Body of pancreas (tissue), 4 donors: ENCODE measurements at regions of chr3 and their contacts with region 1.

Region 1: DNA sequence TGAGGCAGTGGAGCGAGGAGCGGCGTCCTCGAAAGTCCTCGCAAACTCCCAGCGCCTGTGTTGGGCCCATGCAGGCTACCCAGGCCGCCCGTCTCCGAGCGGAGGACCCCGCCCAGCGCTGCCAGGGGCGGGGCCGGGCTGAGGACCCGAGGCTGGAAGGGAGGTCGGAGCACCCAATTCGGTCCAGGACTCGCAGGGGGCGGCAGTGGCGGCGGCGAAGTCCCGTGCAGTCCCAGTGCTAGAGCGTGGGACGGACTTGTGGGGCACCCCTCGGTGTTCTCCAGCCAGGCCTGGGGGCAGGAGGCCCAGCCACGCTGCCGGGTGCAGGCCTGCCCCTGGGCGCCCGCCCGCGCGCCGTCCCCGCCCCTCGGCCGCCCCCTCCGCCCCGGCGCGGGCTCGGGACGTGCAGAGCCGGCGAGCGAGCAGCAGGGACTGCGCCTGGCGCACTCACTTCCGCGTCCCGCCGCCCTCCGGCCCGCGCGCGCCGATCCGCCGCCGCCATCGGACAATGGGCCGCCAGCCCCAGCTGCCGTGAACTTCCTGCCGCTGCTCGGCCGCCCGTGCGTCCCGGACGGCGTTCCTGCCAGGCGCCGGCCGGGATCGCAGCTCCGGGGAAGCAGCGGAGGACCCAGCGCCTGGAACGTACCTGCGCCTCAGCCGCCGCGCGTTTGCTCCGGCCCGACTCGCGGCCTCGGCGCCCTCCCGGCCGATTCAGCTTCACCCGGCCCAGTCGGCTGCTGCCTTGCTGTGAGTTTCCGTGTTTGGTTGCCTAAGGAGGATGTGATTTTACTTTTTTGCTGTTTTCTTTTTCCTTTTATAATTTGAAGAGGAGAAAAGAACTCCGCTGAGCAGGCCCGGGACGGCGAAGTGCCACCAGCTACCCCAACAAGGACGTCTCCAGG is 592 bp upstream of the LIMD1 start:
- DNase-seq: peak; percentile 74 to 83 (median 76)
- ATAC-seq: peak; percentile 86
- H3K4me3 ChIP-seq: peak overlapping the region; percentile 46 to 54
- H3K27ac ChIP-seq: peak overlapping the region; percentile 76 to 91 (median 86)
- H3K4me1 ChIP-seq: peaks cover 57% of the 10 kb centered on the region
- H3K27me3 ChIP-seq: no peaks in the 10 kb centered on the region
- CTCF ChIP-seq: peak in 2 of 7 experiments; percentile 22 to 25
- POLR2A ChIP-seq: peak; percentile 55 to 77 (median 69)

Region 2: GRCh38 chr3:45258317-45258716 is 335.6 kb before region 1 on chr3:
- intact Hi-C with region 1: no loop called
- DNase-seq: no peak
- ATAC-seq: no peak
- H3K4me3 ChIP-seq: no peak overlapping the region
- H3K27ac ChIP-seq: no peak overlapping the region
- H3K4me1 ChIP-seq: no peaks in the 10 kb centered on the region
- H3K27me3 ChIP-seq: no peaks in the 10 kb centered on the region
- CTCF ChIP-seq: no peak
- POLR2A ChIP-seq: no peak

Region 3: DNA sequence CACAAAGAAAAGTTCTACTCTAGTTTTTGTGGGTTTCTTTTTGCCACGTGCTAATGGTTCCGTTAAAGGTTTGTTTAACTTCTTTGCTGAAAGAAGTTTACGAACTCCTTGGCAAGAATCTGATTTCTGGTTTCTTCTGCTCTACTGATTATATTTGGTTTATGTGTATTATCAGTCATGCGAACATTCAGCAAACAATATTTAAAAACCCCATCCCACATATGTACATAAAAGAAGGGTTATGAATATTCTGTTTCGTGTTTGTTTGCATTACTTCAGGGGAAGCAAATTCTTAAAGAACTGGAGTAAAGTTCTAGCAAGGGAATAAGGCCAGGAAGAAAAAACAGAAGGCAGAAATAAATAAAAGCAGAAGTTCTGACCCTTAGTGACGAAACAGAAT is 195.8 kb before region 1 on chr3:
- intact Hi-C with region 1: no loop called
- DNase-seq: no peak
- ATAC-seq: no peak
- H3K4me3 ChIP-seq: no peak overlapping the region
- H3K27ac ChIP-seq: no peak overlapping the region
- H3K4me1 ChIP-seq: no peaks in the 10 kb centered on the region
- H3K27me3 ChIP-seq: no peaks in the 10 kb centered on the region
- CTCF ChIP-seq: no peak
- POLR2A ChIP-seq: no peak

Region 4: GRCh38 chr3:45516829-45517228 is 77.1 kb before region 1 on chr3:
- intact Hi-C with region 1: loop called (anchors 5 kb)
- DNase-seq: no peak
- ATAC-seq: no peak
- H3K4me3 ChIP-seq: no peak overlapping the region
- H3K27ac ChIP-seq: no peak overlapping the region
- H3K4me1 ChIP-seq: no peaks in the 10 kb centered on the region
- H3K27me3 ChIP-seq: no peaks in the 10 kb centered on the region
- CTCF ChIP-seq: no peak
- POLR2A ChIP-seq: no peak

Region 5: GRCh38 chr3:45656575-45657363 is 62.8 kb after region 1 on chr3:
- intact Hi-C with region 1: loop called (anchors 5 kb)
- DNase-seq: peak; percentile 89 to 95 (median 94)
- ATAC-seq: peak; percentile 88
- H3K4me3 ChIP-seq: no peak overlapping the region
- H3K27ac ChIP-seq: peak overlapping the region in 2 of 4 donors; percentile 3 to 29
- H3K4me1 ChIP-seq: peaks cover 4% of the 10 kb centered on the region
- H3K27me3 ChIP-seq: no peaks in the 10 kb centered on the region
- CTCF ChIP-seq: peak; percentile 88 to 99 (median 98)
- POLR2A ChIP-seq: no peak